Heart left ventricle (tissue), 16 donors: ENCODE measurements at regions of chr3 and their contacts with region 1.

Region 1: DNA sequence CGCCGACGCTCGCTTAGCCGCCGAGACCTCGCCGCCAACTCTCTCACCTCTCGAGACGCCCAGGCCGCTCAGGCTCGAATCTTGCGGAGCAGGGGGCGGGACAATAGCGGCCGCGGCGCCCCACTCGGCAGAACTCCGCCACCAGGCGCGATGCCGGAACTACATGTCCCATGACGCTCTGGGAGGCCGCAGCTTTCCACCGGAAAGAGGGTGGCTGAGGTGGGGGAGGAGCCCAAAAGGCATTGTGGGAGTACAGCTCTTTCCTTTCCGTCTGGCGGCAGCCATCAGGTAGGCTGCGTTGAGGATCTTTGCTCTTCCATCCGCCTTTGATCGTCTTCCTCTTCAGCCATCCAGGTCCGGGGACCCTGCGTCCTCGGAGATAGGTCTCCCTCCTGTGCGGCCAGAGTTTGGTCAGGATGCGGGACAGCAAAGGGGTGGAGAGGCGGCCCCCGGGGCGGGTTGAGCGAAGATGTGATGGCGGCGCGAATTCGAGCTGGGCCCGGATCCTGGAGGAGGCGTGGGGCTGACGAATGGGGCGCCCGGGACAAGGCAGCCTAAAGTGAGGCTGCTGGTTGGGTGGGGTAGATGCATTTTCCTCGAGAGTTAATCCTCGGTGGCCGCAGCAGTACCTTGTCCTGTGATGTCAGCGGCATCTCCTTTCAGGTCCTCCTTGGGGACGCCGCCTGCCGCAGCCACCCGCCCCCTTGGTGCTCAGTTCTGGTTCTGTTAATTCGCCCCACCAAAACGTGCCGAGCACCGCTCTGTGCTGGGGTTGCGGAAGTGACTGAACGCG is at the starts of genes NKIRAS1 and RPL15:
- DNase-seq: peak; percentile 97 to 99 (median 98)
- ATAC-seq: peak; percentile 98 to 99 (median 99)
- H3K4me3 ChIP-seq: peak within 1 kb of the TSS; percentile 76 to 99 (median 85)
- H3K27ac ChIP-seq: peak within 1 kb of the TSS; percentile 66 to 96 (median 92)
- H3K4me1 ChIP-seq: peaks cover 7 to 48% (median 25%) of the 10 kb centered on the region in 12 donors
- H3K27me3 ChIP-seq: no peaks in the 10 kb centered on the region
- CTCF ChIP-seq: peak; percentile 40 to 73 (median 52)
- POLR2A ChIP-seq: peak; percentile 58 to 96
- total RNA-seq, gene NKIRAS1: 15.2 to 23.2 (median 18.8) TPM
- total RNA-seq, gene RPL15: 834 to 1,126 (median 995) TPM

Region 2: DNA sequence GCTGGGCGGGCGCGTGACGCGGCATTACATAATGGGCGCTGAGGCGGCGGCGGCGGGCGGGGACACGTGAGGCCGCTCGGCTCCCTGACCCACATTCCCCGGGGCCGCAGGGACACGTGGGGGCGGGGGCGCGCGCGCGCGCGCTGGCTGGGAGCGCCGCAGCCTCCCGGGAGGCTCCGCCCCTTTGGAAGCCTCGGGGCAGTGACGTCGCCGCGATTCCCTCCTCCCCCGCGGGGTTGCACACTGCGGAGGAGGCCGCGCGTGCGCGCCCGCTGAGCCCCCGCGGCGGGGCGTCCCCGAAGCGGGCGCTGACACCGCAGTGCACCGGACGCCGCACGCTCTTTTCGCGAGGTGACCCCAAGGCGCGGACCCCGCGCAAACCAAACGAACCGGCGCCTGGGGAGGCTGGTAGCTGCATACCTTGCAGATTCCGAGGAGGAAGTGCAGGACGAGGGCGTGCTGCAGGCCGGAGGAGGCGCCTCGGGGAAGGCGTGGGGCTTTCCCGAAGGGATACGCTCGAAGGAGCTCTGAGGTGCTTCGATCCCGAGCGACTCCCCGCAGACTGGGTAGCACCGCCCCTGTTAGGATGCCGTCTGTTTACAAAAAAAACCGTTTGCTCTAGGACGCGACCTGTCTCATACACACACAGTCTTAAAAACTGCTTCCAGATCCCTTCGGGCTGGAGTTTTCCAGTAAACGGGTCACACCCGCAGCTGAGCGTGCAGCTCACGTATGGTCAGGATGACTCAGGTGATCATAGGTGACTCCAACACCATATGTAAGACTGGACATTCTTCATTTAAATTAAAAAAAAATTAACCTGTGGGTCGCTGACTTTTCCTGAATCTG is 29.0 kb after region 1 on chr3:
- intact Hi-C with region 1: loop called in 6 of 10 experiments (anchors 1 to 2 kb)
- DNase-seq: peak; percentile 98 to 99 (median 99)
- ATAC-seq: peak; percentile 90 to 95 (median 90)
- H3K4me3 ChIP-seq: peak overlapping the region; percentile 57 to 99 (median 84)
- H3K27ac ChIP-seq: peak overlapping the region in 11 of 12 donors; percentile 89 to 99 (median 98)
- H3K4me1 ChIP-seq: peaks cover 13 to 54% (median 50%) of the 10 kb centered on the region in 12 donors
- H3K27me3 ChIP-seq: no peaks in the 10 kb centered on the region
- CTCF ChIP-seq: peak in 2 of 12 donors; percentile 13 to 36
- POLR2A ChIP-seq: peak in 1 of 2 donors; percentile 60